ENCODE measurements at regions of chr9 and their contacts with region 1.

Region 1: GRCh38 chr9:38035873-38036272 is 33.2 kb downstream of the SHB start:
- DNase-seq: no peak
- ATAC-seq: peak; percentile 71
- H3K4me3 ChIP-seq: peak overlapping the region in 1 of 2 experiments; percentile 35; a peak in 2 of 4 replicates
- H3K27ac ChIP-seq: peak overlapping the region; percentile 65
- H3K4me1 ChIP-seq: peaks cover 70 to 92% of the 10 kb centered on the region in 2 experiments
- H3K27me3 ChIP-seq: no peaks in the 10 kb centered on the region
- CTCF ChIP-seq: no peak
- POLR2A ChIP-seq: no peak
- RAD21 ChIP-seq: no peak

Region 2: GRCh38 chr9:37953775-37954437 is 82.0 kb before region 1 on chr9:
- CTCF ChIA-PET with region 1: no interaction called
- POLR2A ChIA-PET with region 1: no interaction called
- RAD21 ChIA-PET with region 1: no interaction called
- intact Hi-C with region 1: loop called (anchors 5 kb)
- DNase-seq: peak; percentile 87
- ATAC-seq: peak; percentile 73
- H3K4me3 ChIP-seq: peak overlapping the region; percentile 15 to 45; a peak in 3 of 4 replicates
- H3K27ac ChIP-seq: peak overlapping the region; percentile 84
- H3K4me1 ChIP-seq: peaks cover 44 to 87% of the 10 kb centered on the region in 2 experiments
- H3K27me3 ChIP-seq: no peaks in the 10 kb centered on the region
- CTCF ChIP-seq: no peak
- POLR2A ChIP-seq: no peak
- RAD21 ChIP-seq: no peak

Region 3: GRCh38 chr9:38017149-38017884 is 18.6 kb before region 1 on chr9:
- CTCF ChIA-PET with region 1: no interaction called
- POLR2A ChIA-PET with region 1: no interaction called
- RAD21 ChIA-PET with region 1: no interaction called
- intact Hi-C with region 1: no loop called
- DNase-seq: no peak
- ATAC-seq: no peak
- H3K4me3 ChIP-seq: no peak overlapping the region
- H3K27ac ChIP-seq: no peak overlapping the region
- H3K4me1 ChIP-seq: peaks cover 16 to 39% of the 10 kb centered on the region in 2 experiments; a peak in 3 of 4 replicates
- H3K27me3 ChIP-seq: no peaks in the 10 kb centered on the region
- CTCF ChIP-seq: 0 out of 6 replicates have a peak, but pooled peaks of 1 of the 3 experiments have one; percentile 8
- POLR2A ChIP-seq: no peak
- RAD21 ChIP-seq: peak; percentile 40

Region 4: DNA sequence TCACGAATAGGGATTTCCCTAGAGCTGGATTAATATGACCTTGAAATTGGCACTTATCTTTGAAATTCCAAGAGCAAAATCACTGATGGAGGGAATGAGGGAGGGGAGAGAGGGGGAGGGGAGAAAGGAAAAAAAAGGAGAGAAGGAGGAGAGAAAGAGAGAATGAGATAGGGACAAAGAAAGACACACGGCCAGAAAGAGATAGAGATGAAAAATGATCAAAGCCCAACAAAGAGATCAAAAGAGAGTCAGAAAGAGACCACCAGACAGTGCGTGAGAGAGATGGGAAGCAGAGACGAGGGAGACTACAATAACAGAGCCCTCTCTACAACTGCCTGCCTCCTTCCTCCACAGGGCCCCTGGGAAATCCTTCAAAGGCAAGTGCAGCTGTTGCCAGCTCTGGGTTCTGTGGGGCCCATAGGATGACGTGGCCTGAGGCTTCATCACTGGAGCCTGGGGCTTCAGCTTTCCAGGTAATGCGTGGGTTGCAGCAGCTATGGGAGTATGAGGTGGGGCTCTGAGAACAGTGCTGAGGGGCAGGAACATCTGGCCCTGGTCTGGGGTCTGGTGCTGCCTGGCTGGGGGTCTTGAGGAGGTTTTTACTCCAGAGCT is 91.5 kb after region 1 on chr9:
- CTCF ChIA-PET with region 1: no interaction called
- POLR2A ChIA-PET with region 1: no interaction called
- RAD21 ChIA-PET with region 1: no interaction called
- intact Hi-C with region 1: no loop called
- DNase-seq: no peak
- ATAC-seq: no peak
- H3K4me3 ChIP-seq: no peak overlapping the region
- H3K27ac ChIP-seq: no peak overlapping the region
- H3K4me1 ChIP-seq: no peaks in the 10 kb centered on the region
- H3K27me3 ChIP-seq: no peaks in the 10 kb centered on the region
- CTCF ChIP-seq: no peak
- POLR2A ChIP-seq: no peak
- RAD21 ChIP-seq: no peak